Activated T-helper 2 cell treated with anti-CD3 and anti-CD28 coated beads, Interferon-gamma antibody, Interleukin-2, Interleukin-4, amounts not matched to agents 10 μg/mL and 5 μg/mL and 100 μg/mL, durations not matched to agents 14 hours and 24 hours and 36 hours (primary cell): ENCODE measurements at regions of chr2 and their contacts with region 1.

Region 1: DNA sequence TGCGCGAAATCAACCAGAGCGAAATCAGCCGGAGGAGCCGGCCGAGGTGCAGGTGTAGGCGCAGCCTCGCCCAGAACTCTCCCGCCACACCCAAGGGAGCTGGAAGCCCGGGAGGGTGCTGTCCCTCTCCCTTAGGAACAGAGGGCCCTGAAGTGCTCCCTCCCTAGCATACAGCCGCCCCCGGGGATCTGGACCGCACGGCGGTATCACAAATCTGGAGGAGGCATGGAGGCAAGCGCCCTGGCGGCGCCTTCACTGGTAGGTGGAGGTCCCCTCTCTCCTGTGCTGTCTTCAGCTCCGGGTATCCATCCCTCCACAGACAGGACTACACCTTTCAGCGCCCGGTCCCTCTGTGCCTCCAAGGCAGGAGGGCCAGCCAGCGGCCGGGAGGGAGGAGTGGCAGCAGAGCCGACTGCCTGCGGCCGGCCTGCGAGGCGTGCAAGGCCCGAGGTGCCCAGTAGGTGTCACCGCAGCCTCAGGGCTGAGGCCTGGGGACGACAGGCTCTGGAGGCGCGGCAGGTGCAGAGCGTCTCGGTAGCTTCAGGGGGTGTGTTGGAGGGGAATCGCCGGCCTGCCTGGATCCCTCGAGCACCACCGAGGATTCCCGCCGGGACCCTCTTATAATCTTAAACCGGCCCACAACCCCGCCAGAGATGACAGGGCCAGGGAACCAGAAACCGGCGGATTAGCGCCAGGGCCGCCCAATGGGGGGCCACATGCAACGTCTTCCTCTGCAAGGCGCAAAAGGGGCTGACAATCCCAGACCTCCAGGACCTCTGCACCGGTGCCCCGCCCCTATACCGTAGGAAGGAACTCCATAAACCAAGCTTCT is 2.8 kb downstream of the IHH start:
- DNase-seq: peak; percentile 65
- H3K4me3 Mint-ChIP-seq: no peak overlapping the region
- H3K27ac Mint-ChIP-seq: no peak overlapping the region
- H3K4me1 Mint-ChIP-seq: peaks cover 4% of the 10 kb centered on the region
- H3K27me3 Mint-ChIP-seq: peaks cover 50% of the 10 kb centered on the region

Region 2: GRCh38 chr2:218870984-218871344 is 187.0 kb before region 1 on chr2:
- intact Hi-C with region 1: loop called (anchors 5 kb)
- DNase-seq: no peak
- H3K4me3 Mint-ChIP-seq: no peak overlapping the region
- H3K27ac Mint-ChIP-seq: no peak overlapping the region
- H3K4me1 Mint-ChIP-seq: peaks cover 4% of the 10 kb centered on the region
- H3K27me3 Mint-ChIP-seq: peaks cover 74% of the 10 kb centered on the region

Region 3: DNA sequence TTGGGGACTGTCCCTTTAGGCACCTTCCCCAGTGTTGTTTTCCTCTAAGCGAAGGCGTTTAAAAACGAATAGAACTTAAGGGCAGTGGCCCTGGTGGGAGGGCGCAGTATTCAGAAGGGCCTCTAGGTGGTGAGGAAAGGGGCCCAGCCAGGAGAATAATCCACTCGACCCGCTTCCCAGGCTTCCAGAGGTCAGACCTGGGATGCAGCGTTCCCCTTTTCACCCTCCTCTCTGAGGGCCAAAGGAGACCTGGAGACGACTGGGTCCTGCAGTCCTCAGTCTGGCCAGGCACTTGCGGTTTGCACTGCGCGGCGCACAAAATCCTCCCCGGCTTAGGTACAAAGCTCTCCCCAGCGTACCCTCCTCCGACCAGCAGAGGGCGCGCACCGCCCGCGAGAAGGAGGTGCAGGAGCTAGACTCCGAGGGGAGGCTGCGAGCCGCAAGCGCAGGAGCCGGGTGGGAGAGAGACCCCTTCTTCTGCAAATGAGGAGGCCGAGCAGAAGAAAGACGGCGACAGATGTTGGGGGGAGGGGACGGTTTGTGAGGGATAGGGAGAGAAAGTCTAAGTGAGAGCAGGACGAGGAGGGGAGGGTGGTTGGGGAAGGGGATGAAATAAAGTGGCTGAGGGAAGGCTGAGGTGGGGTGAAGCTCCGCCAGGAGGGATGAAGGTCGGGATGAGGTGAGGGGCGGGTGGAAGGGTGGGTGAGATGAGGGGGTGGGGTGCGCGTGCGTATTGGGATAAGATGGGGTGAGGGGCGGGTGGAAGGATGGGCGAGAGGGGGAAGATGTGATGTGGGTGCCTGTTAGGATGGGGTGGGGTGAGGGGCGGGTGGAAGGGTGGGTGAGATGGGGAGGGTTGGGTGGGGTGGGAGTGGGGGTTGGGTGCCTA is 77.8 kb before region 1 on chr2:
- intact Hi-C with region 1: loop called (anchors 2 kb)
- DNase-seq: peak; percentile 76
- H3K4me3 Mint-ChIP-seq: no peak overlapping the region
- H3K27ac Mint-ChIP-seq: peak overlapping the region; percentile 28
- H3K4me1 Mint-ChIP-seq: peaks cover 9% of the 10 kb centered on the region
- H3K27me3 Mint-ChIP-seq: peaks cover 65% of the 10 kb centered on the region

Region 4: GRCh38 chr2:218995972-218996711 is 61.8 kb before region 1 on chr2:
- intact Hi-C with region 1: loop called (anchors 2 kb)
- DNase-seq: peak; percentile 63
- H3K4me3 Mint-ChIP-seq: peak overlapping the region; percentile 21
- H3K27ac Mint-ChIP-seq: no peak overlapping the region
- H3K4me1 Mint-ChIP-seq: peaks cover 2% of the 10 kb centered on the region
- H3K27me3 Mint-ChIP-seq: peaks cover 73% of the 10 kb centered on the region

Region 5: DNA sequence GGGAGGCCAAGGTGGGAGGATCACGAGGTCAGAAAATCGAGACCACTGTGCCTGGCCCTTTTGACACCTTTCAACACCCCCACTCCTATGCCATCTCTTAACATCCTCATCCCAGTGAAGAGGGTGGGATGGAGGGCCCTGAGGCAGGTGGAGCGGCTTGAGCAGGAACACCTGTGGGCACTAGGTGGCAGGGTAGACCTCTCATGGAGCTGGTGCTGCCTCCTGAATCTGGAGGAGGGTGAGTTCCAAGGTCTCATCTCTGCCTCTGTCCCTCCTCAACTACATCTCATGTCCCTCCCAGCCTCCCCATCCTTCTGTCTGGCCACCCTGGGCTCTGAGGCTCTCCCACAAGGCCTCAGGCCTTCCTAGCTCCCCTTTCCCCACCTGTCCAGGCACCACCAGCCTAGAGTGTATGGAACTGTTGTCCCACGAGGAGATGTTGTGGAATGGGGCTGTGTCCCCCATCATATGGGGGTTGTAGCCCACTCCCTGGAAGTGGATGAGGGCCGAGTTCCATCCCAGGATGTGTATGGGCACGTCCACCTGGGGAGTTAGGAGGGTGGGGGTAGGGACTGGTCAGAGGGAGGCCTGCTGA is 47.7 kb before region 1 on chr2:
- intact Hi-C with region 1: no loop called
- DNase-seq: no peak
- H3K4me3 Mint-ChIP-seq: no peak overlapping the region
- H3K27ac Mint-ChIP-seq: no peak overlapping the region
- H3K4me1 Mint-ChIP-seq: no peaks in the 10 kb centered on the region
- H3K27me3 Mint-ChIP-seq: peaks cover 16% of the 10 kb centered on the region

Region 6: GRCh38 chr2:219119422-219120043 is 61.6 kb after region 1 on chr2:
- intact Hi-C with region 1: loop called (anchors 1 kb)
- DNase-seq: peak; percentile 39
- H3K4me3 Mint-ChIP-seq: no peak overlapping the region
- H3K27ac Mint-ChIP-seq: no peak overlapping the region
- H3K4me1 Mint-ChIP-seq: peaks cover 4% of the 10 kb centered on the region
- H3K27me3 Mint-ChIP-seq: no peaks in the 10 kb centered on the region

Region 7: GRCh38 chr2:219155054-219155644 is 97.2 kb after region 1 on chr2:
- intact Hi-C with region 1: loop called (anchors 2 kb)
- DNase-seq: no peak
- H3K4me3 Mint-ChIP-seq: no peak overlapping the region
- H3K27ac Mint-ChIP-seq: no peak overlapping the region
- H3K4me1 Mint-ChIP-seq: peaks cover 10% of the 10 kb centered on the region
- H3K27me3 Mint-ChIP-seq: no peaks in the 10 kb centered on the region

Region 8: DNA sequence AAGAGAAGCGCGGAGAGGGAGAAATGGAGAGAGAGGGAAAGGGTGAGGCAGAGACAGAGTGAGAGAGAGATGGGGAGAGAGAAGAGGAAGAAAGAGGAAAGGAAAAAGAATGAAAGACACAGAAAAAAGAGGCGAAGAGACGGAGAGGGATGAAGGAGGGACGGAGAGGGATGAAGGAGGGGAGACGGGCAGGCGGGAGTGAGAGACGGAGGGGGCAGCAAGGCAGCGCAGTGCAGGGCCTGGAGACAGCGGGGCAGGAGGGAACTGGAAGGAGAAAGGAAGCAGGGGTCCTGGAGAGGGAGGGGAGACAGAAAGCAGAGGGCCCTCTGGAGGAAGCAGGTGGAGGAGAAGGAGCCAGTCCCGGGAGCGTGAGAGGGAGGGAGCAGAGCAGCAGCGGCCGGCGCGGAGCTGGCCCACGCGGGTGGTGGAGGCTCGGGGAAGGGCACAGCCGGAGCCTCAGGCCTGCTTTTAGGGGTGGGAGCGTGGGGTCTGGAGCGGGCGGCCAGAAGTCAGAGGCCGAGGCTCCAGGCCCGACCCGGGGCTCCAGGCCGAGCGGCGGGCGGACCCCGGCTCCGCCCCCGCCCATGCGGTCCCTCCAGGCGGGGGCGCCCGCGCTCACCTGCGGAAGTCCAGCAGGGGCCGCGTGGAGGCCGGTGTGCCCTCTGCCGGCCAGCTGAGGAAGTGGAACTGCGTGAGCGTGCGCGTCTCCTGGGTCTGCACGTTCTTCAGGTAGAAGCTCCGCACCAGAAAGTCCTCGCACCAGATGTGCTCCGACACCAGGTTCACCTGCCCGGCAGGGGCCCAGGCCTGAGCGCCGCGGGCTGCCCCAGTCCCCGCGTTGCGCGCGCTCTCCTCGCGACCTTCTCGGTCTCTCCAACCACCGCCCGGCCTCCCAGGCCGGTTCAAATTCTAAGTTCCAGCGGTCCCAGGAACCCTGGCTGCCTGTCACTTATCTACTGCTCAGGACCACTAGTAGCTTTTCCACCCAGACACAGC is 236.7 kb after region 1 on chr2:
- intact Hi-C with region 1: loop called (anchors 5 kb)
- DNase-seq: peak; percentile 85
- H3K4me3 Mint-ChIP-seq: peak overlapping the region; percentile 79
- H3K27ac Mint-ChIP-seq: peak overlapping the region; percentile 87
- H3K4me1 Mint-ChIP-seq: peaks cover 11% of the 10 kb centered on the region
- H3K27me3 Mint-ChIP-seq: peaks cover 1% of the 10 kb centered on the region